ENCODE measurements at regions of chr7 and their contacts with region 1.

Region 1: GRCh38 chr7:38660427-38661099 is 29.4 kb upstream of the AMPH start:
- DNase-seq: peak in 2 of 5 donors; percentile 18 to 23
- H3K4me3 ChIP-seq: no peak overlapping the region
- H3K4me3 Mint-ChIP-seq: no peak overlapping the region
- H3K27ac ChIP-seq: no peak overlapping the region
- H3K27ac Mint-ChIP-seq: no peak overlapping the region
- H3K4me1 ChIP-seq: no peaks in the 10 kb centered on the region
- H3K4me1 Mint-ChIP-seq: no peaks in the 10 kb centered on the region
- H3K27me3 ChIP-seq: no peaks in the 10 kb centered on the region
- H3K27me3 Mint-ChIP-seq: peaks cover 4 to 44% of the 10 kb centered on the region in 2 donors

Region 2: DNA sequence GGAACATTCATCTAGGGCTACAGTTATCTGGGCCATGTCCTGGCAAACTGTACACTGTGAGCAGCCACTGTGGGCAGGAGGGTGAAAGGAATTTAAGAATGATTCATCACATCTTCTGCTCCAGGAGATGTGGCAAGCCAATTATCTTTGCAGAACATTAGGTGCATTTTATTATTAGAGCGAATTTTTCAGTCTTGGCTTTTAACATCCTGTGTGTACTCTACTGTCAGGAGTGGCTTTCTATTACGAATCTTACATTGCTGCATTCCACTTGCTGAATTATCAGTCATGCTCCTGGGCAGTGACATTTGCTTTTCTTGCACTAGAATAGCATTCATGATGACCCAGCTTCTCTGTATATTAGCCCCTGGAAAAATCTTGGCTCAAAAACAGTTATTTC is 277.9 kb before region 1 on chr7:
- CTCF ChIA-PET with region 1: interaction called, 12 read pairs
- POLR2A ChIA-PET with region 1: no interaction called
- DNase-seq: no peak
- H3K4me3 ChIP-seq: no peak overlapping the region
- H3K4me3 Mint-ChIP-seq: no peak overlapping the region
- H3K27ac ChIP-seq: no peak overlapping the region
- H3K27ac Mint-ChIP-seq: peak overlapping the region in 1 of 8 donors; percentile 42
- H3K4me1 ChIP-seq: no peaks in the 10 kb centered on the region
- H3K4me1 Mint-ChIP-seq: peaks cover 13 to 27% (median 24%) of the 10 kb centered on the region in 3 donors
- H3K27me3 ChIP-seq: no peaks in the 10 kb centered on the region
- H3K27me3 Mint-ChIP-seq: no peaks in the 10 kb centered on the region

Region 3: DNA sequence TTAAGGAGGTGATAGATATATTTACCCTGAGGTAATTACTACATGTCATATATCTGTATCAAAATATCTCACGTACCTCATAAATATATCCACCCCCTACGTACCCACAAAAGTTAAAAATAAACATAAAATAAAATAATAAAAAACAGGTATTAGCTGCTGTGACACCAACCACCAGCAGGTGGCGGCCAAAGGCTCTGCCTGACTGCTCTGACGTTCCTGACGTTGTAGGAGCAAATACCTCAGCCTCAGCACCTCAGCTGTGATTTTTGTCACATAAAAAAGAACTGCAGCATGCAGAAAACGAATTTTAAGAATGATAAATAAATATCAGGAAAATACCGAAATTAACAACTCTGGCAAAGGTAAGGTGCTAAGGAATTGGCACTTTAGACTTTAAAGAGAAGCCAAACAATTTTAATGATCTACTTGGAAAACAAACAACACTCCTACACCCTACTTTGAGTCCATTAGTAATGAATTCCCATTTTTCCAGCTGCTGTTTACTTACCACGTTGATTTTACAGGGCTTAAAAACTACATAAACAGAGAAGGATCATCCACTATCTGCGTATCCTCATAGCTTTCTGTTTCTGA is 261.7 kb before region 1 on chr7:
- CTCF ChIA-PET with region 1: interaction called, 22 read pairs
- POLR2A ChIA-PET with region 1: no interaction called
- DNase-seq: peak; percentile 26 to 61 (median 30)
- H3K4me3 ChIP-seq: no peak overlapping the region
- H3K4me3 Mint-ChIP-seq: no peak overlapping the region
- H3K27ac ChIP-seq: no peak overlapping the region
- H3K27ac Mint-ChIP-seq: no peak overlapping the region
- H3K4me1 ChIP-seq: no peaks in the 10 kb centered on the region
- H3K4me1 Mint-ChIP-seq: peaks cover 4 to 7% (median 5%) of the 10 kb centered on the region in 3 donors
- H3K27me3 ChIP-seq: no peaks in the 10 kb centered on the region
- H3K27me3 Mint-ChIP-seq: peaks cover 3 to 24% of the 10 kb centered on the region in 2 donors